Right cardiac atrium (tissue), 5 donors: ENCODE measurements at regions of chr12 and their contacts with region 1.

Region 1: DNA sequence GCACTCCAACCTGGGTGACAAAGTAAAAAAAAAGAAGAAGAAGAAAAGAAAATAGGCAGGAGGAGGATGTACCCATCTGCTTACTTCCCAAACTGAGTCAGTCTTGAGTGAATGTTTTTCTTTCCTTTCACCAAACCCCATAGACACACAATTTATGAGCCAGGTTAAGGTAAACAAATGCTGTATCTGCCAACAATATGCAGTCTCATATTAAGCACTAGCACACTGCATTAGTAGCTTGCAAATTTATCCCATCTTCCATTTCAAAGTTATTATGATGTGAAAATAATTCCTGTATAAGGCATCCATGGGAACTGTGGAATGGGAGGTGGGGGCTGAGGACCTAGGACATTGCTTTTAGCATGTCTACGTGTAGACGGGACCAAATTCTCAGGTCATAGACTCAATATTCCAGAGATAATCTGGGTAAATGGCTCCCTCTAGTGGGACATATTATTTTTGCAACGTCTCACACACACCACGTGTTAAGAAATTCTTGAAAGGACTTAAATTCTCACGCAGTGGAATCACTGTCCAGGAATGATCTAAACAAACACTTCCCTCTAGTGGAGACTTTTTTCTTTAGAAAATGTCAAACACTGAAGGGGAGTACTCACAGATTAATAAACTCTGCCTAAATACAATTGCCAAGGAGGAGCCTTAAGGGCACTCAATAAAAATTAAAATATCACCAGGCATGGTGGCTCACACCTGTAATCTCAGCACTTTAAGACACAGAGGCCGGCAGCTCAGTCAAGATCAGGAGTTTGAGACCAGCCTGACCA is 17.1 kb upstream of the OR10P1 start:
- DNase-seq: no peak
- ATAC-seq: peak; percentile 85 to 89
- H3K4me3 ChIP-seq: no peak overlapping the region
- H3K27ac ChIP-seq: no peak overlapping the region
- H3K4me1 ChIP-seq: no peaks in the 10 kb centered on the region
- H3K27me3 ChIP-seq: no peaks in the 10 kb centered on the region

Region 2: GRCh38 chr12:55188974-55189556 is 430.5 kb before region 1 on chr12:
- intact Hi-C with region 1: loop called in 3 of 4 experiments (anchors 5 to 10 kb)
- DNase-seq: no peak
- ATAC-seq: peak; percentile 59 to 65
- H3K4me3 ChIP-seq: no peak overlapping the region
- H3K27ac ChIP-seq: no peak overlapping the region
- H3K4me1 ChIP-seq: no peaks in the 10 kb centered on the region
- H3K27me3 ChIP-seq: no peaks in the 10 kb centered on the region

Region 3: GRCh38 chr12:55194382-55194781 is 425.2 kb before region 1 on chr12:
- intact Hi-C with region 1: loop called (anchors 5 to 10 kb)
- DNase-seq: no peak
- ATAC-seq: no peak
- H3K4me3 ChIP-seq: no peak overlapping the region
- H3K27ac ChIP-seq: no peak overlapping the region
- H3K4me1 ChIP-seq: no peaks in the 10 kb centered on the region
- H3K27me3 ChIP-seq: no peaks in the 10 kb centered on the region